ENCODE measurements at regions of chr3 and their contacts with region 1.

Region 1: GRCh38 chr3:142993958-142994442 is 7.4 kb upstream of the U2SURP start:
- DNase-seq: peak; percentile 32 to 75 (median 60)
- ATAC-seq: peak; percentile 75
- H3K4me3 ChIP-seq: no peak overlapping the region
- H3K4me3 Mint-ChIP-seq: no peak overlapping the region
- H3K27ac ChIP-seq: no peak overlapping the region
- H3K27ac Mint-ChIP-seq: no peak overlapping the region
- H3K4me1 ChIP-seq: no peaks in the 10 kb centered on the region
- H3K4me1 Mint-ChIP-seq: peaks cover 5% of the 10 kb centered on the region
- H3K27me3 ChIP-seq: peaks cover 0 to 3% of the 10 kb centered on the region in 2 experiments
- H3K27me3 Mint-ChIP-seq: peaks cover 17% of the 10 kb centered on the region
- CTCF ChIP-seq: peak; percentile 79

Region 2: GRCh38 chr3:142586803-142587406 is 407.1 kb before region 1 on chr3:
- CTCF ChIA-PET with region 1: interaction called, 11 read pairs
- POLR2A ChIA-PET with region 1: no interaction called
- intact Hi-C with region 1: loop called (anchors 2 kb)
- DNase-seq: peak in 3 of 9 experiments; percentile 26 to 72 (median 62)
- ATAC-seq: peak; percentile 68
- H3K4me3 ChIP-seq: no peak overlapping the region
- H3K4me3 Mint-ChIP-seq: no peak overlapping the region
- H3K27ac ChIP-seq: no peak overlapping the region
- H3K27ac Mint-ChIP-seq: no peak overlapping the region
- H3K4me1 ChIP-seq: no peaks in the 10 kb centered on the region
- H3K4me1 Mint-ChIP-seq: no peaks in the 10 kb centered on the region
- H3K27me3 ChIP-seq: no peaks in the 10 kb centered on the region
- H3K27me3 Mint-ChIP-seq: peaks cover 14% of the 10 kb centered on the region
- CTCF ChIP-seq: peak; percentile 60

Region 3: GRCh38 chr3:142670120-142670519 is 323.9 kb before region 1 on chr3:
- CTCF ChIA-PET with region 1: no interaction called
- POLR2A ChIA-PET with region 1: no interaction called
- intact Hi-C with region 1: no loop called
- DNase-seq: no peak
- ATAC-seq: no peak
- H3K4me3 ChIP-seq: no peak overlapping the region
- H3K4me3 Mint-ChIP-seq: no peak overlapping the region
- H3K27ac ChIP-seq: no peak overlapping the region
- H3K27ac Mint-ChIP-seq: no peak overlapping the region
- H3K4me1 ChIP-seq: no peaks in the 10 kb centered on the region
- H3K4me1 Mint-ChIP-seq: no peaks in the 10 kb centered on the region
- H3K27me3 ChIP-seq: no peaks in the 10 kb centered on the region
- H3K27me3 Mint-ChIP-seq: no peaks in the 10 kb centered on the region
- CTCF ChIP-seq: no peak

Region 4: DNA sequence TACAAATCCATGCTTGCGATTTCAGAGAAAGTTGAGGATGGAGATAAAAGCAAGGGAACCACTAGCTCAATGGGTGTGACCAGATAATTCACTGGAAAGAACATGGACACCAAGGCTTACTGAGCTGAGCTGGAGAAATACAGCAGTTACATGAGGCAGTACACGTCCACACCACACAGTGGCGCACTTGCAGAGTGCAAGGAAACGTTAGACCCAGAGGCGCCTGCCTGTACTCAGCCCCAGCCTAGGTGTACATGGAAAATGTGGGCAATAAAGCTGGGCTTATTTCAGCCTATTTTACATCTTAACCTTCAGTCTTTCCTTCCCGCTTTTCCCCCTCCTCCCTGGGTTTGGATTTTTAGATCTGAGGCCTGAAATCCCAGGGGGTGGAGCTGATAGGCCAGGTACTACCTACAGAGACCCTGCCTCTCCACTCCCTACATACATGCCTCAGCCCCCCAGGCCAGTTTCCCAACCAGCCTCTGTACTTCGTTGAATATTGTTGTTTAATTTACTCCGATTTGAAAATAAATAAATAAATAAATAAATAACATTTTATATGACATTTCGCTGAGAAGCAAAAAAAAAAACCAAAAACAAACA is 165.2 kb before region 1 on chr3:
- CTCF ChIA-PET with region 1: interaction called, 4 read pairs
- POLR2A ChIA-PET with region 1: no interaction called
- intact Hi-C with region 1: loop called (anchors 2 kb)
- DNase-seq: peak; percentile 15 to 62 (median 38)
- ATAC-seq: peak; percentile 82
- H3K4me3 ChIP-seq: no peak overlapping the region
- H3K4me3 Mint-ChIP-seq: no peak overlapping the region
- H3K27ac ChIP-seq: no peak overlapping the region
- H3K27ac Mint-ChIP-seq: no peak overlapping the region
- H3K4me1 ChIP-seq: no peaks in the 10 kb centered on the region
- H3K4me1 Mint-ChIP-seq: no peaks in the 10 kb centered on the region
- H3K27me3 ChIP-seq: peaks cover 0 to 4% of the 10 kb centered on the region in 2 experiments
- H3K27me3 Mint-ChIP-seq: peaks cover 25% of the 10 kb centered on the region
- CTCF ChIP-seq: peak; percentile 48

Region 5: GRCh38 chr3:143084856-143085731 is 91.1 kb after region 1 on chr3:
- CTCF ChIA-PET with region 1: no interaction called
- POLR2A ChIA-PET with region 1: no interaction called
- intact Hi-C with region 1: no loop called
- DNase-seq: peak in 1 of 9 experiments; percentile 23
- ATAC-seq: no peak
- H3K4me3 ChIP-seq: no peak overlapping the region
- H3K4me3 Mint-ChIP-seq: no peak overlapping the region
- H3K27ac ChIP-seq: no peak overlapping the region
- H3K27ac Mint-ChIP-seq: no peak overlapping the region
- H3K4me1 ChIP-seq: no peaks in the 10 kb centered on the region
- H3K4me1 Mint-ChIP-seq: no peaks in the 10 kb centered on the region
- H3K27me3 ChIP-seq: no peaks in the 10 kb centered on the region
- H3K27me3 Mint-ChIP-seq: peaks cover 3% of the 10 kb centered on the region
- CTCF ChIP-seq: no peak

Measured in CD8-positive, alpha-beta T cell (primary cell).